A549 (cell line): ENCODE measurements at regions of chr11 and their contacts with region 1.

Region 1: GRCh38 chr11:60831143-60831500 is 10.8 kb upstream of the CCDC86 start:
- DNase-seq: peak; percentile 80 to 83
- ATAC-seq: peak; percentile 93 to 97
- H3K4me3 ChIP-seq: no peak overlapping the region
- H3K27ac ChIP-seq: no peak overlapping the region
- H3K4me1 ChIP-seq: no peaks in the 10 kb centered on the region
- CTCF ChIP-seq: peak; percentile 96
- EP300 ChIP-seq: no peak
- POLR2A ChIP-seq: no peak
- RAD21 ChIP-seq: peak; percentile 90 to 93

Region 2: DNA sequence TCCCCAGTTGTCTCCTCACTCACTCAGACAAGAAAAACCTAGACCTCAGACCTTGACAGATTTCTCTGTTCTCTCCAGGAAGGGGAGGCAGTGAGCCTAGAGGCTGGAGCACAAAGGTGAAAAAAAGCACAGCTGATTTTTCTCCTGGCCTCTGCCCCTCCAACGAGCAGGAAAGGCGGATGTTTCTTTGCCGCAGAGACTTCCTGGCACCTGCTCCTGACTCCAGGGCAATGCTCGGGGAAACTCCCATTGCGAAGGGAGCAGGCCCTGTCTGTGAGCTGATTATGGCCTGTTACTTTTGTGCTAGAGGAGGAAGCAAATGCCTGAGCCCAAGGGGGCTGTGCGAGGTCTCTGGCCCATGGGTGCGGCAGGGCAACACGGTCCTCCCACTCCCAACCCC is 20.6 kb before region 1 on chr11:
- CTCF ChIA-PET with region 1: interaction called, 12 read pairs
- POLR2A ChIA-PET with region 1: no interaction called
- DNase-seq: no peak
- ATAC-seq: no peak
- H3K4me3 ChIP-seq: no peak overlapping the region
- H3K27ac ChIP-seq: no peak overlapping the region
- H3K4me1 ChIP-seq: no peaks in the 10 kb centered on the region
- CTCF ChIP-seq: no peak
- EP300 ChIP-seq: no peak
- POLR2A ChIP-seq: no peak
- RAD21 ChIP-seq: no peak

Region 3: DNA sequence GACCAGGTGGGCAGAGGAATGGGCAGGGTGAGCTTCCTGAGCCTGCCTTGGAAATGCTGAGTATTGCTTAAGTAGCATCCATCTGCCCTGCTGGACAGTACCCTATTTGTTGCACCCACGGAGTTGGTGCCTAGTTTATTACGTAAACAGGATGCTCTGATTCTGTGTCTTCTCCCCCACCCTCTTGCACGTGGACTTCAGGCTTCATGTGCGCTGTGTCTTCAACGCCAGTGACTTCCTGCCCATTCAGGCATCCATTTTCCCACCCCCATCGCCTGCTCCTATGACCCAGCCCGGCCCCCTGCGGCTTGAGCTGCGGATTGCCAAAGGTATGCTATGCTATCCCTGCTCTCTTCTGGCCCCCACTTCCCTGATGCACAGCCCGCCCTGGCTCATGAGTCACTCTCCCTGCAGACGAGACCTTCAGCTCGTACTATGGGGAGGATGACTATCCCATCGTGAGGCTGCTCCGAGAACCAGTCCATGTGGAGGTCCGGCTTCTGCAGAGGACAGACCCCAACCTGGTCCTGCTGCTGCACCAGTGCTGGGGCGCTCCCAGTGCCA is 41.9 kb after region 1 on chr11:
- CTCF ChIA-PET with region 1: interaction called, 79 read pairs
- POLR2A ChIA-PET with region 1: no interaction called
- DNase-seq: no peak
- ATAC-seq: peak; percentile 16 to 37; a peak in 2 of 6 replicates
- H3K4me3 ChIP-seq: no peak overlapping the region
- H3K27ac ChIP-seq: peak overlapping the region in 1 of 2 experiments; percentile 75; a peak in 3 of 6 replicates
- H3K4me1 ChIP-seq: peaks cover 22% of the 10 kb centered on the region
- CTCF ChIP-seq: no peak
- EP300 ChIP-seq: no peak
- POLR2A ChIP-seq: no peak
- RAD21 ChIP-seq: no peak

Region 4: DNA sequence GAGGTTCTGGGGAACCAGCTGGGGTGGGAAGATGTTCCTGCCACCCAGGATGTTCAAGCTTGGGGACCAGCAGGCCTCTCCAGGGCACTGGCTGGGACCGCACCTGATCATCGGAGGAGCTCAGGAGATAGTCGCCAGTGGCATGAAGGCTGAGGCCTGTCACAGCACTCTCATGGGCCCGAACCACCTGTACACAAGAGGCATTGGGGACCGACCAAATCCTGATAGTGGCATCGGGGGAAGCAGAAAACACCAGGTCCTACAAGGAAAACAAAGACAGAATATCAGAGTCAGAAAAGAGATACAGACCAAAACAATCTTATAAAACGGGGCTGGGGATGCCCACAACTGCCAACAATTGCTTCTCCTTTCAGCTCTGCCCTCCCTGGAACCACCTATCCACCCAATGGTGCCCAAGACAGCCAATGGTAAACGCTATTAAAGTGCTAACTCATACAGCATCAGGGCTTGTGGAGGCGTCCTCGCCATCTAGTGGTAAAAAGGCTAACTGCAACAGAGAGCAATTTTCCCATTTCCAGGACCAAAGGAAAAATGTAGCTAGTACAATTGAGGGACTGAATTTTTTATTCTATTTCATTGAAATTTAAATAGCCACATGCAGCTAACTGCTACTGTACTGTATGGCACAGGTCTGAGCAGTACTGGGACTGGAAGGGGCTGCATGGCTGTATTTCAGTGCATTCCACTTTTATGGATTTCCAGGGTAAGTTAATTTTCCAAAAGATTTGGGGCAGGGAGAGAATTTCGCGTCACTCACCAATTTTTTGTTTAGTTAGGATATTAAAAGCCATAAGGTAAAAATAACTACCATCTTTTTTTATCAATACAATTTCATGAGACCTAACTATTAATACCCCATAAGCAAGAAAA is 68.2 kb after region 1 on chr11:
- CTCF ChIA-PET with region 1: interaction called, 153 read pairs
- POLR2A ChIA-PET with region 1: interaction called, 3 read pairs
- DNase-seq: peak; percentile 76 to 81
- ATAC-seq: peak; percentile 85 to 97
- H3K4me3 ChIP-seq: no peak overlapping the region
- H3K27ac ChIP-seq: peak overlapping the region; percentile 46 to 75; a peak in 5 of 6 replicates
- H3K4me1 ChIP-seq: peaks cover 7% of the 10 kb centered on the region; the same call in 2 of the 3 replicates
- CTCF ChIP-seq: peak; percentile 85
- EP300 ChIP-seq: no peak
- POLR2A ChIP-seq: no peak
- RAD21 ChIP-seq: peak; percentile 45 to 55

Region 5: GRCh38 chr11:61129639-61130523 is 298.8 kb after region 1 on chr11:
- CTCF ChIA-PET with region 1: interaction called, 26 read pairs
- POLR2A ChIA-PET with region 1: no interaction called
- DNase-seq: peak; percentile 91 to 99
- ATAC-seq: peak; percentile 82 to 98
- H3K4me3 ChIP-seq: no peak overlapping the region
- H3K27ac ChIP-seq: peak overlapping the region; percentile 13 to 75; a peak in 3 of 6 replicates
- H3K4me1 ChIP-seq: 0 out of 3 replicates have a peak, but pooled peaks cover 4% of the 10 kb centered on the region
- CTCF ChIP-seq: peak; percentile 99
- EP300 ChIP-seq: no peak
- POLR2A ChIP-seq: no peak
- RAD21 ChIP-seq: peak; percentile 90 to 91

Region 6: DNA sequence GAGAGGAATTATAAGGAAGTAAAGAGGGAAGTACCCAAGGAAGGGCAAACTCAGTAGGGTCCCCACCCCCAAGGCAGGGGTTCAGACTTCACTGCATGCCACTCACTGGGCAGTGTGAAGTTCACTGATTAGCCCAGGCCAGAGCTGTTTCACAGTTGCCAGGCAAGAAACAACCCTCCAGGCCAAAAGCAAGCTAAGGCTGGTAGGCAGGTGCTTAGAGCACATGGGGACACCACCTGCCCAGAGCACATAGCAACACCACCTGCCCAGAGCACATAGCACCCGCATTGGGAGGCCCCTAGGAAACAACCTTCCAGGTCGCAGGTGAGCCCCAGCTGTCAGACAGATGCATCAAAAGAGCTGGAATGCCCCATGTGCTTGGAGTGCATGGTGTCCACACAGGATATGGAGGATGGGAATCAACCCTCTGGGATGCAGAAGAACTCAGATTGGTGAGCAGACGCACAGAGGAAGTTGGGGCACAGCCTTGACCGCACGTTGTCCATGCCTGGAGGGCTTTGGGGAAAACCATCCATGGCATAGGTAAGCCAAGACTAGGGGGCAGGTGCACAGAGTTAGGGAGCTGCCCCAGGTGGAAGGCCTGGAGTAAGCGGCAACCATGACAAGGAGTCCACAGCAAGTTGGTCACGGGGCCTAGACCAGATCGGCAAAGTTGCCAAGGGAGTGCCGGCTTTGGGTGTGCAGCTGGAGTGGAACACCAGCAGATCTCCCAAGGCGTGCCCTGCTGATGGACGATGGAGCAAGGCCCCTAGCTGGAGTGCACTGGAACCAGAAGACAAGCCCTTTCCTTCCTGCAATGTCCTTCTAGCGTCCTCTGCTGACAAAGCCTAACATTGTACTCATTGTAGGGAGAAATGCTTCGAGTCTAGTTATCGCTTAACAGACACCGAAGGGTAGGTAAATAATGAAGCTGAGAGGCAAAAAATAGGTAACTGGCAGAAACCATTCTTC is 553.4 kb after region 1 on chr11:
- CTCF ChIA-PET with region 1: interaction called, 11 read pairs
- POLR2A ChIA-PET with region 1: no interaction called
- DNase-seq: peak in 1 of 2 experiments; percentile 66
- ATAC-seq: peak; percentile 72 to 76
- H3K4me3 ChIP-seq: no peak overlapping the region
- H3K27ac ChIP-seq: no peak overlapping the region
- H3K4me1 ChIP-seq: peaks cover 3% of the 10 kb centered on the region; the same call in 2 of the 3 replicates
- CTCF ChIP-seq: peak; percentile 17; the same call in 1 of the 3 replicates
- EP300 ChIP-seq: no peak
- POLR2A ChIP-seq: no peak
- RAD21 ChIP-seq: peak; percentile 28 to 54; a peak in 2 of 5 replicates